A549 (cell line): ENCODE measurements at regions of chr18 and their contacts with region 1.

Region 1: GRCh38 chr18:42298759-42299675 is 344.0 kb downstream of the PIK3C3 start:
- DNase-seq: peak; percentile 15 to 56
- ATAC-seq: peak in 1 of 2 experiments; percentile 86; a peak in 4 of 6 replicates
- H3K4me3 ChIP-seq: no peak overlapping the region
- H3K27ac ChIP-seq: no peak overlapping the region
- H3K4me1 ChIP-seq: no peaks in the 10 kb centered on the region
- CTCF ChIP-seq: peak; percentile 58
- EP300 ChIP-seq: no peak
- POLR2A ChIP-seq: no peak
- RAD21 ChIP-seq: peak; percentile 55 to 63

Region 2: DNA sequence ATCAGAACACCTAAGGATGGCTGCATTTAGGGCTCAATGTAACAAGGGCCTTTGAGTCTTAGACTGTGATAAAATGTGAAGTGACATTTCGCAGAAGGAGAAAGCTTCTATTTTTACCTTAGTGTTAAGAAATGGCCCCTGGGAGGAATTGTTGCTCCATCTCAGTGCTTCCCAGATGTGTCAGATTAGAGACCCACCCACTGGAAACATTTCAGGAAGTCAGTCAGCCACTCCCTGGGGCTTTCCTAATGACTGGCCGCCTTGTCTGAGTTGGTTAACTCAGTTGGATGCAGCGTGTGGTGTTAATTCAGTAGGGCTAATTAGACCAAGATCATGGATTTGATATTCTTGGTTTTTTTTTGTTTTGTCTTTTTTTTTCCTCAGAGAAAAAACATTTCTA is 11.9 kb after region 1 on chr18:
- CTCF ChIA-PET with region 1: interaction called, 11 read pairs
- POLR2A ChIA-PET with region 1: no interaction called
- DNase-seq: no peak
- ATAC-seq: no peak
- H3K4me3 ChIP-seq: no peak overlapping the region
- H3K27ac ChIP-seq: no peak overlapping the region
- H3K4me1 ChIP-seq: no peaks in the 10 kb centered on the region
- CTCF ChIP-seq: no peak
- EP300 ChIP-seq: no peak
- POLR2A ChIP-seq: no peak
- RAD21 ChIP-seq: no peak

Region 3: DNA sequence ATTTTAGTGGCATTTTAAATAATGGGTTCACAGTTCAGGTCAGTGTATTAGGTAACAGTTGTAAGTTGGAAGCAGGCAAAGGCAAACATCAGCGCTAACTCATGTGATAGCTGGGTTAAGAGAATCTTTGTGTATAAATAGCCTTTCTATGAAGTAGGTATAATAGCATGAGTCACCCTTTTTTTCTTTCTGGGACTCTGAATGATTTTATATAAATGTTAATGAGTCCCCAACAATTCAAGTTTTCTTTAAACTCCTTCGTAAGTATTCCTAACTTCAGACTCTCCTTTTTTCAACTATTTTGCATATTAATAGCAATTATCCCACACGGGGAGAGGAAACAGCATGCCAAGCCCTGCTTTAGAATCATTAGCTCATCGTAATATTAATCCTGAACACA is 40.4 kb after region 1 on chr18:
- CTCF ChIA-PET with region 1: no interaction called
- POLR2A ChIA-PET with region 1: no interaction called
- DNase-seq: no peak
- ATAC-seq: no peak
- H3K4me3 ChIP-seq: no peak overlapping the region
- H3K27ac ChIP-seq: no peak overlapping the region
- H3K4me1 ChIP-seq: no peaks in the 10 kb centered on the region
- CTCF ChIP-seq: no peak
- EP300 ChIP-seq: no peak
- POLR2A ChIP-seq: no peak
- RAD21 ChIP-seq: no peak